Mammary epithelial cell (primary cell): ENCODE measurements at regions of chr17 and their contacts with region 1.

Region 1: DNA sequence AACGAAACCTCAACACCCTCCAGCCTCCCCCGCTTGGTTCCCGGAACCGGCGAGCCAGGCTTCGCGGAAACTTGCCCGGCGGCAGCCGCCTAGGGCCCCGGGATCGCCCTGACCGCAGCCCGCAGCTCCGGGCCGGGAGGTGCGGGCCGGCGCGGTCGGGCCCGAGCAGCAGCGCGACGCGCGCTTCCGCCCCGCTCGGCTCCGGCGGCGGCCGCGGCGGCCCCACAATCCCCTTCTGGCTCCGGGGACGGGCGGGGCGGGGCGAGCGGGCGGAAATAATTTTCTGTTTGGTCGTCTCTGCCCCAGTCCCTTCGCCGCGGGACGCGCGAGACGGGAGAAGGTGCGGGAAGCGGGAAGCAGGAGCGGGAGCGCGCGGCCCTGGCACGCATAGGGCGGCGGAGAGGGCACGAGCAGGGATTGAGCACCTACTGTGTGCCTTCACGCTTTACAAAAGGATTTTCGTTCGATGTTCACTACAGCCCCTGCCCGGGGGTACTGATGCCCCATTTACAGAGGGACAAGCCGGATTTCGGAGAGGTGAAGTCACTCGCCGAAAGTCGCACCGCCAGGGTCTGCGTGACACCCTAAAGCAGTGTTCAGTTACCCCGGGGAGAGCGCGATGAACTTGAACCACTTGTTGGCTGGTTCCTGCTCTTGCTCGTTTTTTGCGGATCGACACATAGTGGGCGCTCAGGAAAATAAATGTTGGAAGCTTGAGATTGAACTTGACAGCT is 2.7 kb upstream of the MLLT6 start:
- DNase-seq: peak; percentile 88
- H3K4me3 ChIP-seq: peak overlapping the region; percentile 62 to 76 (median 71)
- H3K27ac ChIP-seq: peak overlapping the region; percentile 62
- H3K4me1 ChIP-seq: peaks cover 29% of the 10 kb centered on the region
- H3K27me3 ChIP-seq: no peaks in the 10 kb centered on the region
- CTCF ChIP-seq: no peak

Region 2: GRCh38 chr17:38729886-38730525 is 27.7 kb after region 1 on chr17 and contains the start of gene CISD3:
- CTCF ChIA-PET with region 1: interaction called, 17 read pairs
- dilution Hi-C with region 1: loop called (anchors 5 kb)
- in situ Hi-C with region 1: no loop called
- intact Hi-C with region 1: loop called (anchors 2 kb)
- DNase-seq: peak; percentile 74
- H3K4me3 ChIP-seq: peak within 1 kb of the TSS; percentile 65 to 79 (median 68)
- H3K27ac ChIP-seq: peak within 1 kb of the TSS; percentile 41
- H3K4me1 ChIP-seq: peaks cover 12% of the 10 kb centered on the region
- H3K27me3 ChIP-seq: no peaks in the 10 kb centered on the region
- CTCF ChIP-seq: peak; percentile 40 to 44
- total RNA-seq, gene CISD3: 3.3 to 30.4 TPM

Region 3: DNA sequence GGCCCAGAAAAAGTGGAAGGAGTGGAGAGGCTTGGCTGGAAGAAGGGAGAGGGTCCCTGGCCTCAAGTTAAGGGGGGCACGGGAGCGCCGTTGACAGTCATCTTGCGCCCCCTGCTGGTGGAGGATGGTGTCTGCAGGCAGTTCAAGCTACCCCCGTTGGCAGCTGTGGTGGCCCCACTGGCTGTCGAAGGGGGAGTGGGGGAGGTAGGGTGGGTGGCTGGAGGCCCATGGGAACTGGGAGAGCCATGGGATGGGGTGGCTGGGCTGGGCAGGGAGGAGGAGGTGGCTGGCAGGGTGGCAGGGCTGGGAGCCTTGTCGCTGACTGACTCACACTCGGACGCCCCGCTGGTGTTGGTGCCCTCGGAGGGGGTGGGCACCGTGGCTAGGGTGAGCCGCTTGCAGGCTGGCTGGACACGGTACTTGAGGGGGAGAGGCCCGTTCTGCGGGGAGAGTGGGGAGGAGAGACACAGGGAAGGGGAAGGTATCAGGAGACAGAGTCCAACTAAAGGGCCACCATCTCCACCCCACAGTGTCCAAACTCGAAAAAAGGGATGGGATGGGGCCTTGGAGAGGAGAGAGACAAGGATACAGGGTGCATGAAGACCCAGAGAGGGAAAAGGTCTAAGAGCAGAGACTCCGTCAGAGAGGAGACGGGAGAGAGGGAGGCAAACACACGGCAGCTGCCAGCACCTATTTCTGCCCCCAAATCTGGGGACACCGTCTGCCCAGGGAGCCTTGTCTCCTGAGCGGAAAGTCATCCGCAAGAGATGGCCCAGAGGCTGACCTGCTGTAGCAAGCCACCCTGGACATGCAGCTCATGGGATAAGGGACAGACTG is 33.0 kb after region 1 on chr17:
- CTCF ChIA-PET with region 1: interaction called, 17 read pairs
- dilution Hi-C with region 1: loop called (anchors 5 kb)
- in situ Hi-C with region 1: no loop called
- intact Hi-C with region 1: loop called (anchors 2 kb)
- DNase-seq: no peak
- H3K4me3 ChIP-seq: no peak overlapping the region
- H3K27ac ChIP-seq: no peak overlapping the region
- H3K4me1 ChIP-seq: peaks cover 8% of the 10 kb centered on the region
- H3K27me3 ChIP-seq: no peaks in the 10 kb centered on the region
- CTCF ChIP-seq: peak; percentile 68 to 92

Region 4: DNA sequence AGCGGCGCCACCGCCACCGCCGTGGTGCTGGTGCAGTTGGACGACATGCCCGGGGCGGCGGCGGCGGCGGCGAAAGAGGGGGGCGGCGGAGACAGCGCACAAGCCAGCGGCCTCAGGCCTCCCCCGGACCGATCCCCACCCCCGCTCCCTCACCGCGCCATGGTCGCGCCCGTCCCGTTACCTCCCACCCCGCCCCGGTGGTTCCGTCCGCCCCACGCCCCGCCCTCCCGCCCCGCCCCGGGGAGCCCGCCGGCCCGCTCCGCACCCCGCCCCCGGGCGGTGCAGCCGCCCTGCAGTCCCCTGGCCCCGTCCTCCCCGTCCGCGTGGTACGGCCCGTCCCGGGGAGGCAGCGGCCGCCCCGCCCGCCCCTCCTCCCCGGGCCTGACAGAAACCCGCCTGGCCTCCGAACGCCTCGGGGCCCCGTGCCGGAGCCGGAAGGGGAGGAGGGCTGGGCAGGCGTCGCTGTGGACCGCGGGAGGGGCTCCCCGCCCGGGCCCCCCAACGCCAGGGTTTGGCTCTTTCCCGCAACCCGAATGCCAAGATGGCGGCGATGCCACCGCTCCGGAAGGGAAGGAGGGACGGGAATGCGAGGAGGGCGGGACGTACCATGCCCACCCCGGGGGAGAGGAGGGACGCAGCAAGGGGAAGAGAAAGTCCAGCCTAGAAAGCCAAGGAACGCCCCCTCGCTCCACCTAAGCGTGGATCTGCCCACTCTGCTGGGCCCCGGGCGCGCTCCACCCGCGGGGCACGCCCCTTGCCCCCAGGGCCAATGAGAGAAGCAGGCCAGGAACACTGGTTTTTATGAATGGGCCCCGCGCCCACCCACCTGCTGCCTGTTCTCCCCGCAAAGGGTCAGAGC is 97.3 kb after region 1 on chr17 and contains the start of gene PIP4K2B:
- CTCF ChIA-PET with region 1: no interaction called
- dilution Hi-C with region 1: loop called (anchors 5 kb)
- in situ Hi-C with region 1: no loop called
- intact Hi-C with region 1: no loop called
- DNase-seq: peak; percentile 95
- H3K4me3 ChIP-seq: peak within 1 kb of the TSS; percentile 73 to 95 (median 86)
- H3K27ac ChIP-seq: peak within 1 kb of the TSS; percentile 85
- H3K4me1 ChIP-seq: peaks cover 17% of the 10 kb centered on the region
- H3K27me3 ChIP-seq: no peaks in the 10 kb centered on the region
- CTCF ChIP-seq: no peak
- total RNA-seq, gene PIP4K2B: 34.6 to 55.7 TPM